OCI-LY7 (cell line): ENCODE measurements at regions of chr2 and their contacts with region 1.

Region 1: GRCh38 chr2:181723731-181724130 is 43.4 kb upstream of the NEUROD1 start:
- DNase-seq: no peak
- H3K4me3 ChIP-seq: no peak overlapping the region
- H3K27ac ChIP-seq: no peak overlapping the region
- H3K4me1 ChIP-seq: no peaks in the 10 kb centered on the region
- CTCF ChIP-seq: no peak

Region 2: GRCh38 chr2:181517685-181518301 is 205.9 kb before region 1 on chr2:
- CTCF ChIA-PET with region 1: no interaction called
- POLR2A ChIA-PET with region 1: no interaction called
- intact Hi-C with region 1: no loop called
- DNase-seq: no peak
- H3K4me3 ChIP-seq: no peak overlapping the region
- H3K27ac ChIP-seq: no peak overlapping the region
- H3K4me1 ChIP-seq: no peaks in the 10 kb centered on the region
- CTCF ChIP-seq: no peak

Region 3: DNA sequence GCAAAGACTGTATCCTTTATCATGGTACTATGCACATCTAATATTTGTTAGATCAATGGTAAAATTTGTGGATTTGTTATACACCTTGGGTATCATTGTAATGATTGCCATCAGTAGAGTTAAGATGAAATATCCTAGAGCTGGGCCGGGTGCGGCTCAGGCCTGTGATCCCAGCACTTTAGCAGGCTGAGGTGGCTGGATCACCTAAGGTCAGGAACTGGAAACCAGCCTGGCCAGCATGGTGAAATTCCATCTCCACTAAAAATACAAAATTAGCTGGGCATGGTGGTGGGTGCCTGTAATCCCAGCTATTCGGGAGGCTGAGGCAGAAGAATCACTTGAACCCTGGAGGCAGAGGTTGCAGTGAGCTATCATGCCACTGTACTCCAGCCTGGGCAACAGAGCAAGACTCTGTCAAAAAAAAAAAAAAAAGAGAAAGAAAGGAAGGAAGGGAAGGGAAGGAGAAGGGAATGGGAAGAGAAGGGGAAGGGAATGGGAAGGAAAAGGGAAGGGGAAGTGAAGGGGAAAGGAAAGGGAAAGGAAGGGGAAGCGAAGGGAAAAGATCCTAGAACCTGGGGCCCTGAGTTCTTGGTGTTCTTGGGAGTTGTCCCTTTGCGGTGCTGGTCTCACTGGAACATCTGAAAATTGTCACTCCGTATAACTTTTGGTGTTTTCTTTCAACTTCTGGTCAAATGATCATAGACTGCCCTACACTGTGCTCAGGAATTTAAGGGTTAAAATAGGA is 27.7 kb after region 1 on chr2:
- CTCF ChIA-PET with region 1: no interaction called
- POLR2A ChIA-PET with region 1: interaction called, 10 read pairs
- intact Hi-C with region 1: no loop called
- DNase-seq: no peak
- H3K4me3 ChIP-seq: no peak overlapping the region
- H3K27ac ChIP-seq: no peak overlapping the region
- H3K4me1 ChIP-seq: no peaks in the 10 kb centered on the region
- CTCF ChIP-seq: no peak